ENCODE measurements at regions of chr1 and their contacts with region 1.

Region 1: DNA sequence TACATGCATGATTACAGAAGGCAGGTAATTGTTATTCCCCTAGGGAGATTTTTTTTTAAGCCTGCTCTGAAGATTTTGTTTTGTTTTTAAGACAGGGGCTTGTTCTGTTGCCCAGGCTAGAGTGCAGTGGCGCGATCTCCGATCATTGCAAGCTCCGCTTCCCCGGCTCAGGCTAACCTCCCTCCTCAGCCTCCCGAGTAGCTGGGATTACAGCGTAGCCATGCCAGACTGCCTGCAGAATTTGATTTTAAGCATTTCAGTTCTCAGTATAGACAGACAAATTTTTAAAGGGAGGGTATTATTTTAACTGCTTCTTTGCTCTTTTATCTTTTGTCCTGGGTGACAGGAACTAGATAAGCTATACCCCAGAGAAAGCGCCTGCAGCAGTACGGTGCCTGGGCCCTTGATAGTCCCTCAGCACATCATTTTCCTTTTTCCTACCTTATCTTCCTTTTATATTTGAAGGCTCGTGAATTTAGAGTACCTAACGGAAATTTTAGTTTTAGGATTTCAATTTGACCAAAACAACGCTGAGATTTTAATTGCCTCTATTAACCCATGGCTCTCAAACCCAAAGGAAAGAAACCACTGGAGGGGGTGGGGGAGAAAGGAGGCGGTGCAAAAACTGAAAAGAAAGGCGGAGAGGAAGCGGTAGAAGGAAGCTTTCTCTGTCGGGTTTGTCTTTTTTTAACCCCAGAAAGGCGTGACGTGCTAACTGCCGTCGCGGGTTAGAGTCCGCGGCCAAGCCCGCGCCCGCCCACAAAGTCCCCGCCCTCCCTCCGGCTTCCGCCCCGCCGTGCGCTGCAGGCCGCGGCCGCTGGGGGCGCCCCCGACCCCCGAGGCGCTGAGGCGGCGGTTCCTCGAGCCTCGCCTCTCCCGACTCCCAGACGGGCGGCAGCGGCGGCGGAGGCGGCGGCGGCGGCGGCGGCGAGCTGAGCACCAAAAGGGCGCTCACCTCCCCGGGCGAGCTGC is at the start of gene EEIG2:
- DNase-seq: peak; percentile 51 to 85
- ATAC-seq: peak; percentile 82 to 85
- H3K4me3 ChIP-seq: peak within 1 kb of the TSS; percentile 66
- H3K27ac ChIP-seq: peak within 1 kb of the TSS; percentile 74 to 94
- H3K4me1 ChIP-seq: peaks cover 19% of the 10 kb centered on the region
- CTCF ChIP-seq: peak; percentile 66
- EP300 ChIP-seq: no peak
- POLR2A ChIP-seq: no peak; the same call in 1 of the 2 replicates
- RAD21 ChIP-seq: no peak
- polyA plus RNA-seq, gene EEIG2: 7.4 and 7.9 TPM in 2 replicates

Region 2: DNA sequence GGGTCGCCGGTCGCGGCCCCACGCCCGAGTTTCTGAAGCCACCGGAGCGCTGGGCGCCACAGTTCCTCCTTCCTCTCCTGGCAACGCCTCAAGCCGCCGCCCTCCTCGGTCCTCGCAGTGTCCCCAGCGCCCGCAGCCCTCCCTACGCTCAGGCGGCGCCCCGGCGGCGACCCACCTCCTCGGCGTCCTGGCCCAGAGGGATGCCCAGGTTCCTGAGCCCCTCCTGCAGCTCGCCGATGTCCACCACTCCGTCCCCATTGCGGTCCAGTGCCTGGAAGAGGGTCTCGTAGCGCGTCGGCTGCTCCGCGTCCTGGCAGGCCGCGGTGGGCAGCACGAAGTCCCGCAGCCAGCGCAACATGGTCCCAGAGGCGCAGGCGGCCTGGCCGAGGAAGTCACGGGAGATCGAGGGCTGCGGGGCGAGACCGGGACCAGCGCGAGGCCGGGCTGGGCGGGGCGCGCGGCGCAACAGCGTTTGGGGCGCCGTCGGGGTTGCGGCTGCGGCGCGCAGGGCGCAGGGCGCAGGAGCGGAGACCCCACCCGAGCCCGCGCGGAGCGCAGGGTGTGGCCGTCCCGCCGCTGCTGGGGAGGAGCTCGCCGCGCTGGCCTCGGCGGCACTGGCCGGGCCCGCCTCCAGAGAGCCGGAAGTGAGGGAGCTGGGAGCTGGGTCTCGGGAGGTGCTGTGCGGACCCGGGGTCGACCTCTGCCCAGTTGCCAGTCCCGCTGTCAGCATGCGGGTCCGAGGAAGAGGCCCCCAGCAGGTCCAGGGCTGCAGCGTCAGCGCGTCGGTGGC is 359.5 kb before region 1 on chr1 and contains the start of gene SLC25A24:
- CTCF ChIA-PET with region 1: no interaction called
- POLR2A ChIA-PET with region 1: interaction called, 12 read pairs
- DNase-seq: peak; percentile 76 to 78
- ATAC-seq: peak; percentile 96 to 98
- H3K4me3 ChIP-seq: peak within 1 kb of the TSS; percentile 75
- H3K27ac ChIP-seq: peak within 1 kb of the TSS; percentile 94 to 98
- H3K4me1 ChIP-seq: peaks cover 16% of the 10 kb centered on the region; the same call in 1 of the 3 replicates
- CTCF ChIP-seq: no peak
- EP300 ChIP-seq: no peak
- POLR2A ChIP-seq: peak; percentile 74
- RAD21 ChIP-seq: no peak
- polyA plus RNA-seq, gene SLC25A24: 34.2 and 45.6 TPM in 2 replicates

Region 3: GRCh38 chr1:108482708-108483107 is 76.8 kb before region 1 on chr1:
- CTCF ChIA-PET with region 1: no interaction called
- POLR2A ChIA-PET with region 1: no interaction called
- DNase-seq: no peak
- ATAC-seq: no peak
- H3K4me3 ChIP-seq: no peak overlapping the region
- H3K27ac ChIP-seq: no peak overlapping the region
- H3K4me1 ChIP-seq: no peaks in the 10 kb centered on the region
- CTCF ChIP-seq: no peak
- EP300 ChIP-seq: no peak
- POLR2A ChIP-seq: no peak
- RAD21 ChIP-seq: no peak

Region 4: GRCh38 chr1:108512239-108512981 is 47.1 kb before region 1 on chr1:
- CTCF ChIA-PET with region 1: interaction called, 41 read pairs
- POLR2A ChIA-PET with region 1: no interaction called
- DNase-seq: peak in 1 of 2 experiments; percentile 34
- ATAC-seq: 0 out of 6 replicates have a peak, but pooled peaks of 1 of the 2 experiments have one; percentile 49
- H3K4me3 ChIP-seq: no peak overlapping the region
- H3K27ac ChIP-seq: no peak overlapping the region
- H3K4me1 ChIP-seq: no peaks in the 10 kb centered on the region
- CTCF ChIP-seq: peak; percentile 79
- EP300 ChIP-seq: no peak
- POLR2A ChIP-seq: no peak
- RAD21 ChIP-seq: peak; percentile 83 to 88

Region 5: DNA sequence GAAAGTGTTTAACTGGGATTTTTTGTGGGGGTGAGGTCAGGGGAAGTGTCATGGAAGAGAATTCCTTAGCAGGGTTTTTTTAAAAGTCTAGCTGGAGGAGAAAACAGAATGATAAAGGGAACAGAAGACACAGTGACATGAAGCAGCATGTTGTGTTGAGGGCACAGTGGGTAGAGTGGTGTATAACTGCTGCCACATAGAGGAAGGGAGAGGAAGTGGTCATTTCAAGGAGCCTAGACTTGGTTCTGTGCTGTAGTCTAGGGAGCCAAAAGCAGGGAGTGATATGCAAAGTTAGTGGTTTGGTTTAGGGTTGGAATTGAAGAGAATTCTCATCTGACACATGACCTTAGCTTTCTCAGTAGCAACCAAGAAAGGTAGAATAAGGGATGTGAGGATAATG is 10.6 kb after region 1 on chr1:
- CTCF ChIA-PET with region 1: interaction called, 19 read pairs
- POLR2A ChIA-PET with region 1: no interaction called
- DNase-seq: peak; percentile 19 to 32
- ATAC-seq: peak; percentile 95 to 96
- H3K4me3 ChIP-seq: no peak overlapping the region
- H3K27ac ChIP-seq: no peak overlapping the region
- H3K4me1 ChIP-seq: peaks cover 6% of the 10 kb centered on the region; the same call in 1 of the 3 replicates
- CTCF ChIP-seq: peak; percentile 30; the same call in 2 of the 3 replicates
- EP300 ChIP-seq: no peak
- POLR2A ChIP-seq: no peak
- RAD21 ChIP-seq: peak; percentile 16 to 39; a peak in 2 of 5 replicates

Region 6: DNA sequence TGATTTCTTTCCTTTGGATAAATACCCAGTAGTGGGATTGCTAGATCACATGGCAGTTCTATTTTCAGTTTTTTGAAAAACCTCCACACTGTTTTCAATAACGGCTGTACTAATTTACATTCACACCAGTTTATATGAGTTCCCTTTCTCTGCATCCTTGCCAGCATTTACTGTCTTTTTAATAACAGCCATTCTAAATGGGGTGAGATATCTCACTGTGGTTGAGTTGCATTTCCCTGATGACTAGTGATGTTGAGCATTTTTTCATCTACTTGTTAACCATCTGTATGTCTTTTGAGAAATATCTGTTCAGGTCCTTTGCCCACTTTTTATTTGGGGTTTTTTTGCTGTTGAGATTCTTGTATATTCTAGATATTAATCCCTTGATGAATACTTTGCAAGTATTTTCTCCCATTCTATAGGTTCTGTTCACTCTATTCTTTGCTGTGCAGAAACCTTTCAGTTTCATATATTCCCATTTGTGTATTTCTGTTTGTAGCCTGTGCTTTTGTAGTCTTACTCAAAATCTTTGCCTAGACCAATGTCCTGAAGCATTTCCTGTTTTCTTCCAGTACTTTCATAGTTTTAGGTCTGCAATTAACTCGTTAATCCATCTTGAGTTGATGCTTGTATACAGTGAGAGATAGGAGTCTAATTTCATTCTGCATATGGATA is 94.1 kb after region 1 on chr1:
- CTCF ChIA-PET with region 1: no interaction called
- POLR2A ChIA-PET with region 1: no interaction called
- DNase-seq: no peak
- ATAC-seq: no peak
- H3K4me3 ChIP-seq: no peak overlapping the region
- H3K27ac ChIP-seq: no peak overlapping the region
- H3K4me1 ChIP-seq: no peaks in the 10 kb centered on the region
- CTCF ChIP-seq: no peak
- EP300 ChIP-seq: no peak
- POLR2A ChIP-seq: no peak
- RAD21 ChIP-seq: no peak

Measured in A549 (cell line).